ENCODE measurements at regions of chr2 and their contacts with region 1.

Region 1: GRCh38 chr2:237256887-237257286 is 157.1 kb downstream of the COL6A3 start:
- DNase-seq: peak; percentile 65
- H3K4me3 ChIP-seq: no peak overlapping the region
- H3K27me3 ChIP-seq: no peaks in the 10 kb centered on the region
- CTCF ChIP-seq: no peak

Region 2: DNA sequence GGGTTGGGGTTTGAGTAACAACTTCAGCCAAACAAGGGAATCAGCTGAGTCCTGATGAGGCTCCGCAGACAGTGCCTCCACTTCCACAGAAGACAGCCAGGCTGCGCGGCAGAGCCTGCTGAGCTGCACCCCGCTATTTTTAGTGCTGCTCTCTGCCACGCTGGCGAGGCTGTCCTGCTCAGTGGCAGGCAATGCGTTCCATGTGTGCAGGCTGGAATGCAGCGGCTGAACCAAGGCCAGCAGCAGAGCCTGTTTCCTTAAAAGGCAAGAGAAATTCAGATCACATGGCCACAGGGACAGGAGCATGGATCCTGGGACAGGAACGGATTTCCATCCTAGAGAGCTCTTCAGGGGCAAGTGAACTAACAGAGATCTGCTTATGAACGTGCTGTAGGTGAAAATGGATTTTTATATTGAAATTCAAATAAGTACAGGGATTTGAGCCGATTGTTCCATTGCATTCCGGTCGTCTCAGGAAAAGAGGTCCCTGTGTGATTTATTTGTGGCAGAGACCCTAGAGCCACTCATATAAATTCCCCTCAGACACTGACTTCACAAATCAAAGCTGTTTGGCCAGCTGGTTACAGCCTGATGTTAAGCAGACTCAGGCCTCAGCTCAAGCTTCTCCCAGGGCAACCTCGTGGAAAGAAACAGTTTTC is 58.4 kb after region 1 on chr2:
- CTCF ChIA-PET with region 1: interaction called, 5 read pairs
- POLR2A ChIA-PET with region 1: interaction called, 11 read pairs
- DNase-seq: peak; percentile 95
- H3K4me3 ChIP-seq: no peak overlapping the region
- H3K27me3 ChIP-seq: no peaks in the 10 kb centered on the region
- CTCF ChIP-seq: peak; percentile 67

Region 3: GRCh38 chr2:237564526-237565131 is 307.7 kb after region 1 on chr2:
- CTCF ChIA-PET with region 1: no interaction called
- POLR2A ChIA-PET with region 1: no interaction called
- DNase-seq: no peak
- H3K4me3 ChIP-seq: no peak overlapping the region
- H3K27me3 ChIP-seq: no peaks in the 10 kb centered on the region; the same call in 1 of the 2 replicates
- CTCF ChIP-seq: no peak

Measured in BJ (cell line).